ENCODE measurements at regions of chr21 and their contacts with region 1.

Region 1: GRCh38 chr21:45129189-45129923 is 55.0 kb downstream of the ADARB1 start:
- DNase-seq: peak in 1 of 2 donors; percentile 49
- H3K4me3 ChIP-seq: no peak overlapping the region
- H3K27ac ChIP-seq: peak overlapping the region in 4 of 5 donors; percentile 73 to 85 (median 74)
- H3K4me1 ChIP-seq: peaks cover 14 to 65% (median 47%) of the 10 kb centered on the region in 4 donors
- H3K27me3 ChIP-seq: no peaks in the 10 kb centered on the region
- CTCF ChIP-seq: no peak
- EP300 ChIP-seq: no peak
- POLR2A ChIP-seq: no peak

Region 2: DNA sequence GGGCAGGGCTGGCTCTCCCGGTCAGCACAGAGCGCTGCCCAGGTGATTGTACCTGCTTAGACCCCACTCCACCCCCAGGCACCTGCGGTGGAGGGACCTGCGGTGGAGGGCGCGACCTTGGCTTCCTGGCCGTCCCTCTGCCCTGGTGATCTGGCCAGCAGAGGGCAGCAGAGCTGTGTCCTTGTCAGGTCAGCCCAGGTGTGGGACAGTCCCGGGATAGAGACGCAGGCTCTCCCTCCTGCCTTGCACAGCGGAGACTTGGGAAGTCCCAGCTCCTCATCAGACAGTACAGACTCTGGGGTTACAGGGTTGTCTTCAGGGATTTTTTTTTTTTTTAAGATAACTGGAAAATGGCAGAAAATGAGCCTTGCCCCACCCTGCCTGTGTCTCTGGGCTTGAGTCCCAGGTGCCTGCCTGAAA is 179.6 kb before region 1 on chr21:
- intact Hi-C with region 1: loop called (anchors 5 kb)
- DNase-seq: peak; percentile 91
- H3K4me3 ChIP-seq: no peak overlapping the region
- H3K27ac ChIP-seq: peak overlapping the region in 1 of 5 donors; percentile 66
- H3K4me1 ChIP-seq: peaks cover 3 to 40% (median 22%) of the 10 kb centered on the region in 4 donors
- H3K27me3 ChIP-seq: no peaks in the 10 kb centered on the region
- CTCF ChIP-seq: peak in 6 of 7 experiments; percentile 65 to 94 (median 90)
- EP300 ChIP-seq: no peak
- POLR2A ChIP-seq: no peak